ENCODE measurements at regions of chrX and their contacts with region 1.

Region 1: DNA sequence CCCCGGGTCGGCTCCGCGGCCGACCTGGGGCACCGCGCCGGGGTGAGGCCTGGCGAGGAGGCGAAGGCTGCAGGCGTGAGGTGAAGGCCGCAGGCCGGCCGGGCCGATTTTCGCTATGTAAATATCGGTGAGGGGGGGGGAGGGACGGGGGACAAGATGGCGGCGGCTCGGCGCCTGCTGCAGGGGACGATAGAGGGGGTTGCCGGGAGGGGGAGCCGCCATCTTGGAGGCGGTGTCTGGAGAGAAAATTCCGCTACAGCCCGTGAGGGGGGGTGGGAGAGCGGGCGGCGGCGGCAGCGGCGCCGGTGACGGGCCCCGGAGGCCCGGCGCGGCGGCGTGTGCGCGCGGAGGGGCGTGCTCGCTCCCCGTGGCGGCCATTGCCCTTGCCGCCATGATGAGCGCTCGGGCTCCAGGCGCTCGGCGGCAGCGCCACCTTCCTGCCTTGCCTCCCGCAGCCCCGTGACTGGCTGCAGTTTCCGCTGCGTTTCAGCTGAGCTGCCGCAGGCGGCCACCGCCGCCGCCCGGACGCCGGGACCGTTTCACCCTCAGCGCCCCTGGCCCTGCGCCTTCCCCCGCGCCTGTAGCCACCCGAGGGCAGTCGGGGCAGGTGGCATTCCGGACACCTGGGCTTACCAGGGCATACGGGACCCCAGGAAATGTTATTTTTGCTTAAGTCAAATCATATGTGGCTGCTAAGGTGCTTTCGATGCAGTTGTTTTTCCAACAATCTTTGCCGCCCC is 692 bp downstream of the ZFX start:
- DNase-seq: peak; percentile 79
- ATAC-seq: peak; percentile 50
- H3K4me3 ChIP-seq: peak overlapping the region; percentile 95
- H3K27ac ChIP-seq: peak overlapping the region; percentile 78
- H3K4me1 ChIP-seq: peaks cover 60% of the 10 kb centered on the region
- H3K27me3 ChIP-seq: no peaks in the 10 kb centered on the region
- CTCF ChIP-seq: no peak; the same call in 1 of the 2 replicates

Region 2: GRCh38 chrX:23782863-23783568 is 367.2 kb before region 1 on chrX and contains the start of gene SAT1:
- CTCF ChIA-PET with region 1: no interaction called
- POLR2A ChIA-PET with region 1: no interaction called
- intact Hi-C with region 1: no loop called
- DNase-seq: peak; percentile 96
- ATAC-seq: peak; percentile 75
- H3K4me3 ChIP-seq: peak within 1 kb of the TSS; percentile 97
- H3K27ac ChIP-seq: peak within 1 kb of the TSS; percentile 94
- H3K4me1 ChIP-seq: peaks cover 45% of the 10 kb centered on the region
- H3K27me3 ChIP-seq: no peaks in the 10 kb centered on the region
- CTCF ChIP-seq: peak; percentile 87
- total RNA-seq, gene SAT1: 414 and 448 TPM in 2 replicates

Region 3: GRCh38 chrX:24081661-24082264 is 68.5 kb before region 1 on chrX:
- CTCF ChIA-PET with region 1: no interaction called
- POLR2A ChIA-PET with region 1: no interaction called
- intact Hi-C with region 1: loop called (anchors 2 kb)
- DNase-seq: peak; percentile 72
- ATAC-seq: peak; percentile 77
- H3K4me3 ChIP-seq: no peak overlapping the region; the same call in 1 of the 2 replicates
- H3K27ac ChIP-seq: no peak overlapping the region
- H3K4me1 ChIP-seq: peaks cover 4% of the 10 kb centered on the region; the same call in 1 of the 2 replicates
- H3K27me3 ChIP-seq: no peaks in the 10 kb centered on the region
- CTCF ChIP-seq: peak; percentile 64

Region 4: GRCh38 chrX:24097741-24098260 is 52.4 kb before region 1 on chrX:
- CTCF ChIA-PET with region 1: no interaction called
- POLR2A ChIA-PET with region 1: no interaction called
- intact Hi-C with region 1: loop called (anchors 5 kb)
- DNase-seq: no peak
- ATAC-seq: no peak
- H3K4me3 ChIP-seq: no peak overlapping the region
- H3K27ac ChIP-seq: no peak overlapping the region
- H3K4me1 ChIP-seq: peaks cover 11% of the 10 kb centered on the region
- H3K27me3 ChIP-seq: no peaks in the 10 kb centered on the region
- CTCF ChIP-seq: no peak

Region 5: GRCh38 chrX:24204331-24204730 is 54.1 kb after region 1 on chrX:
- CTCF ChIA-PET with region 1: no interaction called
- POLR2A ChIA-PET with region 1: interaction called, 10 read pairs
- intact Hi-C with region 1: no loop called
- DNase-seq: peak; percentile 15
- ATAC-seq: peak; percentile 56
- H3K4me3 ChIP-seq: no peak overlapping the region
- H3K27ac ChIP-seq: no peak overlapping the region
- H3K4me1 ChIP-seq: peaks cover 12% of the 10 kb centered on the region; the same call in 1 of the 2 replicates
- H3K27me3 ChIP-seq: no peaks in the 10 kb centered on the region
- CTCF ChIP-seq: no peak

Region 6: GRCh38 chrX:24241822-24242648 is 91.8 kb after region 1 on chrX:
- CTCF ChIA-PET with region 1: no interaction called
- POLR2A ChIA-PET with region 1: no interaction called
- intact Hi-C with region 1: loop called (anchors 10 kb)
- DNase-seq: peak; percentile 49
- ATAC-seq: peak; percentile 67
- H3K4me3 ChIP-seq: no peak overlapping the region
- H3K27ac ChIP-seq: no peak overlapping the region
- H3K4me1 ChIP-seq: no peaks in the 10 kb centered on the region; the same call in 1 of the 2 replicates
- H3K27me3 ChIP-seq: no peaks in the 10 kb centered on the region
- CTCF ChIP-seq: peak; percentile 61